ENCODE measurements at regions of chr7 and their contacts with region 1.

Region 1: GRCh38 chr7:98841179-98841997 is 28.4 kb downstream of the TMEM130 start:
- H3K4me3 ChIP-seq: no peak overlapping the region
- H3K27ac ChIP-seq: no peak overlapping the region
- H3K4me1 ChIP-seq: peaks cover 13% of the 10 kb centered on the region; the same call in 1 of the 2 replicates
- CTCF ChIP-seq: peak; percentile 97

Region 2: DNA sequence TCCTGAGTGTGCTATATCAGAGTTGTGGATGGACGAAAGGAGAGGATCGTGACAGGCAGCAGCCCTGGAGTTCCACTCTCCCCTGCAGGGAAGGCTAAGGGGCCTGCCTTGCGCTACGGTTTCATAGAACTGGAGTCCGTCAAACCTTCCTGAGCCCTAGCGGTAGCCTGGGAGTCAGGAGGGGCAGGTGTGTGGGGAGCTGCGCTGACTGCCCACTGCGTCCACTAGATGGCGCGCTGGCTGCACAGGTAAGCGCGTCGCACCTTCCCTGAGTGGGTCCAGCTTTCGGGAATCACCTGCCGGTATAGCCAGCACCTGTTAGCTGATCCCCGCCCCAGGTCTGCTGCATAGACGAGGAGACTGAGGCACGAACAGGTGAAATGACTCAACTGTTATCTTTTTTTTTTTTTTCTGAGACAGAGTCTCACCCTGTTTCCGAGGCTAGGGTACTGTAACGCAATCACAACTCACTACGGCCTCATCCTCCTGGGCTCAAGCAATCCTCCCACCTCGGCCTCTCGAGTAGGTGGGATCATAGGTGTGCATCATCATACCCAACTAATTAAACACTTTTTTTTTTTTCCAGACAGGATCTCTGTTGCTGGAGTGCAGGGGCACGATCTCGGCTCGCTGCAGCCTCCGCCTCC is 420.3 kb before region 1 on chr7:
- CTCF ChIA-PET with region 1: interaction called, 65 read pairs
- POLR2A ChIA-PET with region 1: interaction called, 4 read pairs
- H3K4me3 ChIP-seq: no peak overlapping the region
- H3K27ac ChIP-seq: no peak overlapping the region
- H3K4me1 ChIP-seq: no peaks in the 10 kb centered on the region
- CTCF ChIP-seq: peak; percentile 96

Region 3: GRCh38 chr7:98434095-98434494 is 407.3 kb before region 1 on chr7:
- CTCF ChIA-PET with region 1: interaction called, 59 read pairs
- POLR2A ChIA-PET with region 1: no interaction called
- H3K4me3 ChIP-seq: no peak overlapping the region
- H3K27ac ChIP-seq: no peak overlapping the region
- H3K4me1 ChIP-seq: no peaks in the 10 kb centered on the region
- CTCF ChIP-seq: no peak

Region 4: GRCh38 chr7:98755128-98755898 is 86.1 kb before region 1 on chr7:
- CTCF ChIA-PET with region 1: interaction called, 12 read pairs
- POLR2A ChIA-PET with region 1: no interaction called
- H3K4me3 ChIP-seq: no peak overlapping the region
- H3K27ac ChIP-seq: no peak overlapping the region
- H3K4me1 ChIP-seq: no peaks in the 10 kb centered on the region
- CTCF ChIP-seq: peak; percentile 80

Region 5: GRCh38 chr7:98763441-98763840 is 77.9 kb before region 1 on chr7:
- CTCF ChIA-PET with region 1: interaction called, 11 read pairs
- POLR2A ChIA-PET with region 1: no interaction called
- H3K4me3 ChIP-seq: no peak overlapping the region
- H3K27ac ChIP-seq: no peak overlapping the region
- H3K4me1 ChIP-seq: no peaks in the 10 kb centered on the region
- CTCF ChIP-seq: no peak

Region 6: GRCh38 chr7:98821348-98821747 is 20.0 kb before region 1 on chr7:
- CTCF ChIA-PET with region 1: interaction called, 13 read pairs
- POLR2A ChIA-PET with region 1: no interaction called
- H3K4me3 ChIP-seq: no peak overlapping the region
- H3K27ac ChIP-seq: no peak overlapping the region
- H3K4me1 ChIP-seq: no peaks in the 10 kb centered on the region
- CTCF ChIP-seq: no peak